Aorta (tissue), 5 donors: ENCODE measurements at regions of chr17 and their contacts with region 1.

Region 1: GRCh38 chr17:35808962-35809854 is at the start of gene TAF15:
- DNase-seq: peak; percentile 97 to 98
- ATAC-seq: peak; percentile 99
- H3K4me3 ChIP-seq: peak within 1 kb of the TSS; percentile 46 to 95
- H3K27ac ChIP-seq: peak within 1 kb of the TSS; percentile 73 to 92
- H3K4me1 ChIP-seq: no peaks in the 10 kb centered on the region
- H3K27me3 ChIP-seq: no peaks in the 10 kb centered on the region
- total RNA-seq, gene TAF15: 136 to 167 TPM

Region 2: DNA sequence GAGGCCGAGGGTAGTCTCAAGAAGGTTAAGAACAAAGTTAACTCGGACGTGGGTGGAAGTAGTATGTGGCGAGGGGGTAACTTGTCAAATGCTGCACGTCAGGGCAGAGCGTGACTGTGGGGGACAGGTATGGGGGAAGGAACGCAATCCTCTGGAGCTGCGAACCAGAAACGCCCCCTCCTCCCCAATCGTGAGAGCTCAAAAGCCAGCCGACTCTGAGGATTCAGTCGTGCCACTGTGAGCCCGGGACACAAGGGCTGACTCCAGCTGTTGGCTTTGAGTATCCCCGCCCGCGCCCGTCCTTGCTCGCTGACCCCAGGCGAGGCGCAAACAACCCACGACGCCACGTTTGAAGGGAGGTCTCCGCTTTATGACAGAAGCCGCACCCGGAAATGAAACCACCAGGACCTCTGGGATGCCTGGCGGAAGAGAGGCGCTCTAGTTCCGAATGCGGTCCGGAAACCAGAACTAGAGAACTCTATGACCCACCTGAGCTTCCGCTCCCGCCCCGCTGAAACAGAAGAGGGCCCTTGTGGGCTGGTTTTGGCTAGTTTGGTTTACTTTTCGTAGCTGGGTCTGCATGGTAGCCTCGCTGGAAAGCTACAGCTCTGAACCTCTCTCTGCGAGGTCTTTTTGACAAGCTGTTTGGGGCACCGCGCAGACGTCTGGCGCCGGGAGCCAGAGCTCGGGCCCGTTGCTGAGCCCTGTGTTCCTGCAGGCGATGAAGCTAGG is 230.8 kb before region 1 on chr17 and contains the start of gene PEX12:
- intact Hi-C with region 1: loop called in 1 of 2 experiments (anchors 5 kb)
- DNase-seq: peak; percentile 94
- ATAC-seq: peak; percentile 98
- H3K4me3 ChIP-seq: peak within 1 kb of the TSS; percentile 55 to 69
- H3K27ac ChIP-seq: peak within 1 kb of the TSS; percentile 25 to 79
- H3K4me1 ChIP-seq: no peaks in the 10 kb centered on the region
- H3K27me3 ChIP-seq: no peaks in the 10 kb centered on the region
- total RNA-seq, gene PEX12: 3.5 to 5.6 TPM

Region 3: DNA sequence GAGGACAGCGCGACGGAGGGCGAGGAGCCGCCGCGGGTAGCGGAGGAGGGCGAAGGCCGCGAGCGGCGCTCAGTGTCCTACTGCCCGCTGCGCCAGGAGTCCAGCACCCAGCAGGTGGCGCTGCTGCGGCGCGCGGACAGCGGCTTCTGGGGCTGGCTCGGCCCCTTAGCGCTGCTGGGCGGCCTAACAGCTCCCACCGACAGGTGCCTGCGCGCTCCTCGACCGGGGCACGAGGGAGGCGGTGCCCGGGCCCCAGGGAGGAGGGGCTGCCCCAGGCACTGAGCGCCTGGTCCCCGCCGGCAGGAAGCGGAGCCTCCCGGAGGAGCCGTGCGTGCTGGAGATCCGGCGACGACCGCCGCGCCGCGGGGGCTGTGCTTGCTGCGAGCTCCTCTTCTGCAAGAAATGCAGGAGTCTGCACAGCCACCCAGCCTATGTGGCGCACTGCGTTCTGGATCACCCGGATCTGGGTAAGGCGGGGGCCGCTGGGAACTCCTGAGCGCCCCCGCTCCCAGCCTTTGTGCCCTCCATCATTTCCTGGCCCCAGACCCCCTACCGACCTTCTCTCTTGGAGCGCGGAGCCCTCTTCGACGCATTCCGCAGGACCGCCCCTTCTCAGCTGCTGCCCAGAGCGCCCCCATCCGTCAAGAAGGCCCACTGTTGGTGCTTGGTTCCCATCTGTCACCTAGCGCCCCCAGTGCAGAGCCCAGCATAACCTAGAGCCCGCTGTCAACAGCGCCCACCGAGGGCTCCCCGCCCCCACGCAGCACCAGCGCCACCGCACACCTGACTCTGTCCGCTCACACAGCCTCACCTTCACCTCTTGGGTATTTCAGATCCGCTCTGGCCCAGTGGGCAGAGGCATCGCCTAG is 44.9 kb before region 1 on chr17:
- intact Hi-C with region 1: loop called (anchors 1 kb)
- DNase-seq: peak; percentile 89 to 95
- ATAC-seq: peak; percentile 96
- H3K4me3 ChIP-seq: peak overlapping the region in 1 of 2 donors; percentile 20
- H3K27ac ChIP-seq: no peak overlapping the region
- H3K4me1 ChIP-seq: no peaks in the 10 kb centered on the region
- H3K27me3 ChIP-seq: no peaks in the 10 kb centered on the region

Region 4: GRCh38 chr17:35865412-35866340 is 56.5 kb after region 1 on chr17:
- intact Hi-C with region 1: no loop called
- DNase-seq: no peak
- ATAC-seq: no peak
- H3K4me3 ChIP-seq: no peak overlapping the region
- H3K27ac ChIP-seq: no peak overlapping the region
- H3K4me1 ChIP-seq: no peaks in the 10 kb centered on the region
- H3K27me3 ChIP-seq: no peaks in the 10 kb centered on the region